Posterior vena cava (tissue), 2 donors: ENCODE measurements at regions of chr5 and their contacts with region 1.

Region 1: GRCh38 chr5:132251220-132251725 is 6.2 kb upstream of the PDLIM4 start:
- DNase-seq: no peak

Region 2: GRCh38 chr5:131796793-131797693 is 454.2 kb before region 1 on chr5 and contains the start of gene FNIP1:
- intact Hi-C with region 1: no loop called
- DNase-seq: peak; percentile 100
- total RNA-seq, gene FNIP1: 34.1 to 39.5 TPM

Region 3: GRCh38 chr5:132265336-132266030 is 14.2 kb after region 1 on chr5:
- intact Hi-C with region 1: loop called in 1 of 2 experiments (anchors 1 kb)
- DNase-seq: peak; percentile 89